Sciatic nerve (tissue), 2 donors: ENCODE measurements at regions of chr6 and their contacts with region 1.

Region 1: GRCh38 chr6:37011656-37012378 is 6.4 kb downstream of the FGD2 start:
- DNase-seq: no peak
- ATAC-seq: peak; percentile 72

Region 2: DNA sequence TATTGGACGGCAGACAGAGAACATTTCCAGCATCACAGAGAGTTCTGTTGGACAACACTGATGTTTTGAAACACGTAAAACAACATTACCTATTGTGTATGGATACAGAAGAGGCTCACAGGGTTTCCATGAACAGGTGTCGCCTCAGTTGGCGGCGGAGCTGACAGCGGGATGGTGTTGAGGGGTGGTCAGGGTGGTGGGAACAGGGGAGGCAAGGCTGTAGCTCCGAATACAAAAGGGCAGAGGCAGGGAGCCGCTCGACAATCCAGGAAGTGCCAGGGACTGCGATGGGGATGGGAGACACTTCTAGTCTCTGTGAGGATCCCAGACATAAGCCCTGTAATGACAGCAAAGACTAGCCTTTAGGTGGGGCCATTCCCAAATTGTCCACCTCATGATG is 71.8 kb before region 1 on chr6:
- intact Hi-C with region 1: loop called (anchors 2 kb)
- DNase-seq: no peak
- ATAC-seq: no peak

Region 3: GRCh38 chr6:37980222-37980595 is 968.4 kb after region 1 on chr6:
- intact Hi-C with region 1: no loop called
- DNase-seq: no peak
- ATAC-seq: no peak